ENCODE measurements at regions of chr2 and their contacts with region 1.

Region 1: DNA sequence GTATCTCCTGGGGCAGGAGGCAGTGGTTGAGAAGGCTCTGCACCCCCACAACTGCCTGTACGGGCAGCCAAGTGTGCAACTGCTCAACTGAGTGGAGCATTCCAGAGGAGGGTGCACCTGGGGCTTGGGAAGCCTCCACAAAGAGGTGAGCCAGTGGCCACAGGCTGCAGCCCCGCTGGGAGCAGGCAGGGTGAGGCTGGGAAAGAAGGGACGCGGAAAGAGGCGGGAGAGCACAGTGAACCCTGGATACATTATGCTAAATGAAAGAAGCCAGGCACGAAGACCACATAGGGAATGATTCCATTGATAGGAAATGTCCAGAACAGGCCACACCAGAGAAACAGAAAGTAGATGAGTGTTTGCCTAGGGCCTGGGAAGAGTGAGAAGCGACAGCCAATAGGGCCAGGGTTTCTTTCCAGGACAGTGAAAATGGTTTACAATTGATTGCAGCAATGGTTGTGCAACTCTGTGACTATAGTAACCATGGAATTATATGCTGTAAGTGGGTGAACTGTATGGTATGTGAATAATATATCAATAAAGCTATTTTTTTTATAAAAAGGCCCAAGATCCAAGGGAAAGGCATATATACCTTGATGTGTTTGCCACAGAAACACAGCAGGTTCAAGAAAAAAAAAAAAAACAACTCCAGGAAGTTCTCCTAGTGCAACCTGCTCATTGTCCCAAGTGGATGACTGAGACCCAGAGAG is 82.4 kb downstream of the DDX1 start:
- DNase-seq: no peak

Region 2: GRCh38 chr2:15584767-15585469 is 89.2 kb before region 1 on chr2:
- intact Hi-C with region 1: no loop called
- DNase-seq: no peak

Region 3: GRCh38 chr2:16425462-16426336 is 751.6 kb after region 1 on chr2:
- intact Hi-C with region 1: no loop called
- DNase-seq: no peak

Region 4: GRCh38 chr2:17181051-17181752 is 1507.1 kb after region 1 on chr2:
- intact Hi-C with region 1: loop called in 1 of 2 experiments (anchors 5 kb)
- DNase-seq: no peak

Measured in posterior vena cava (tissue), 2 donors.